ENCODE measurements at regions of chr17 and their contacts with region 1.

Region 1: GRCh38 chr17:49567871-49568694 is 7.6 kb upstream of the NXPH3 start:
- DNase-seq: peak; percentile 82
- H3K4me3 ChIP-seq: peak overlapping the region; percentile 51
- H3K27ac ChIP-seq: no peak overlapping the region
- H3K4me1 ChIP-seq: peaks cover 3% of the 10 kb centered on the region
- H3K27me3 ChIP-seq: no peaks in the 10 kb centered on the region
- CTCF ChIP-seq: peak; percentile 91

Region 2: DNA sequence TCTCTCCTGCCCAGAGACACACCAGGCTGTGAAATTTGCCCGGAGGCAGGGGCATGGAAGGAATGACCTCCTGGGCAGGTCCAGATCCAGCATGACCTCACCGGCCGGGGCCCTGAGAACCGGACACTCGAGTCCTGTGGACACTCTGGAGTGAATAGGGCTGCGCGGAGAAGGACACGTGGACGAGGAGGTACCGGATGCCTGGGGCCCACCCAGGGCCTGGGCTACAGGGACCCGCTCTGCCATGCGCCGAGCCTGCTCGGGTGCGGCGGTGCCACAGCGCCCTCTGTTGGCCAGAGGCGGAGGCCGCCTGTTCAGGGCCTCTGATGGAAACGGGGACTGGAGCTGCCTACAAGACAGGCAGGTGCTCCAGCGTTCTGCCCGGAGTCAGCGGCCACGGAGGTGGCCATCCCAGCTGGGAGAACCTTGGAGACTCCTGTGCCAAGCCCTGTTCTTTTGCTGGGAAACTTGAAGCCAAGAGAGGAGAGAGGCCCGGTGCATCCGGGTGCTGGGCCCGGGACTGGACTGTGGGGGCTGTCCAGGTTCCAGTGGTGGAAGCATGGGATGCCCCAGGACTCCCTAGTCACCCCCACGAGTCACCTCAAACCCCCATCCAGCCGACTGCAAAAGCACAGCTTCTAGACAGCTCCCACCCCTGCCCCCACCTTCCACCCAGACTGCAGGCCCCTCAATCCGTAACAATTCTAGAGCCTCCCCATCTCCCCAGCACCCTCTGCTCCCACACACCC is 11.7 kb before region 1 on chr17:
- CTCF ChIA-PET with region 1: interaction called, 11 read pairs
- POLR2A ChIA-PET with region 1: no interaction called
- intact Hi-C with region 1: no loop called
- DNase-seq: peak; percentile 88
- H3K4me3 ChIP-seq: no peak overlapping the region
- H3K27ac ChIP-seq: no peak overlapping the region
- H3K4me1 ChIP-seq: peaks cover 4% of the 10 kb centered on the region
- H3K27me3 ChIP-seq: no peaks in the 10 kb centered on the region
- CTCF ChIP-seq: peak; percentile 99

Region 3: DNA sequence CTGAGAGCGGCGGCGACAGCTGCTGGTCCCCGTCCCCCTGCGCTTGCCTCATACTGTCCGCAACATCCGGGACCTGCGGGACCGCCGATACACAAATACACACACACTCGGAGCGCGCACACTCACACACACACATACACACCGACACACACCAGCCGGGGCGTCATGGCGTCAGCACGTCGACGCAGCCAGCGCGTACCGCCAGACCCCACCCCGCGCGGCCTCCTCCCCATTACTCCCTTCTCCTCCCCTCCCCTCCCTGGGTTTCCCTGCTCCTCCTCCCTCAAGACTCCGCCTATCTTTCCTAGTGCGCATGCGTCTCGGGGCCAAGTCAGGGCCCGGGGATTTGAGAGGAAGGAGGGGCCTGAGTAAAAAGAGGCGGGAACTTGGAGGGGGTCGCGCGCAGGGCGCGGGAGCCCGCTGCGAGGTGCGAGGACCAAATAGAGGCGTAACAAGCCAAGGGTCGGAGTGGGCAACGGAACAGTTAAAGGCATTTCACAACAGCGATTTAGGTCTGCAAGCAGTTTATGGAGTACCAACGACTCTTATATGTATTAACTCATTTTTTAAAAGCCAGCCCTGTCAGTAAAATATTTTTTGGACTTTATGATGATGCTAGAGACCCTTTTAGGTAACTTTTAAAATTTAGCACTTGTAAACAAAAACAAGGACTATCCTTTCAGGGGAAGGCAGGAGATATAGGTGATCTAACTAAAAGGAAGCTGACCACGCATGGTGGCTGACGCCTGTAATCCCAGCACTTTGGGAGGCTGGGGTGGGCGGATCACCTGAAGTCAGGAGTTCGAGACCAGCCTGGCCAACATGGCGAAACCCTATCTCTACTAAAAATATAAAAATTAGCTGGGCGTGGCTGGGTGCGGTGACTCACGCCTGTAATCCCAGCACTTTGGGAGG is 110.1 kb after region 1 on chr17 and contains the start of gene SPOP:
- CTCF ChIA-PET with region 1: interaction called, 10 read pairs
- POLR2A ChIA-PET with region 1: no interaction called
- intact Hi-C with region 1: no loop called
- DNase-seq: peak; percentile 99
- H3K4me3 ChIP-seq: peak within 1 kb of the TSS; percentile 73
- H3K27ac ChIP-seq: peak within 1 kb of the TSS; percentile 92
- H3K4me1 ChIP-seq: peaks cover 14% of the 10 kb centered on the region
- H3K27me3 ChIP-seq: no peaks in the 10 kb centered on the region
- CTCF ChIP-seq: no peak
- total RNA-seq, gene SPOP: 53.4 and 66.6 TPM in 2 replicates

Region 4: DNA sequence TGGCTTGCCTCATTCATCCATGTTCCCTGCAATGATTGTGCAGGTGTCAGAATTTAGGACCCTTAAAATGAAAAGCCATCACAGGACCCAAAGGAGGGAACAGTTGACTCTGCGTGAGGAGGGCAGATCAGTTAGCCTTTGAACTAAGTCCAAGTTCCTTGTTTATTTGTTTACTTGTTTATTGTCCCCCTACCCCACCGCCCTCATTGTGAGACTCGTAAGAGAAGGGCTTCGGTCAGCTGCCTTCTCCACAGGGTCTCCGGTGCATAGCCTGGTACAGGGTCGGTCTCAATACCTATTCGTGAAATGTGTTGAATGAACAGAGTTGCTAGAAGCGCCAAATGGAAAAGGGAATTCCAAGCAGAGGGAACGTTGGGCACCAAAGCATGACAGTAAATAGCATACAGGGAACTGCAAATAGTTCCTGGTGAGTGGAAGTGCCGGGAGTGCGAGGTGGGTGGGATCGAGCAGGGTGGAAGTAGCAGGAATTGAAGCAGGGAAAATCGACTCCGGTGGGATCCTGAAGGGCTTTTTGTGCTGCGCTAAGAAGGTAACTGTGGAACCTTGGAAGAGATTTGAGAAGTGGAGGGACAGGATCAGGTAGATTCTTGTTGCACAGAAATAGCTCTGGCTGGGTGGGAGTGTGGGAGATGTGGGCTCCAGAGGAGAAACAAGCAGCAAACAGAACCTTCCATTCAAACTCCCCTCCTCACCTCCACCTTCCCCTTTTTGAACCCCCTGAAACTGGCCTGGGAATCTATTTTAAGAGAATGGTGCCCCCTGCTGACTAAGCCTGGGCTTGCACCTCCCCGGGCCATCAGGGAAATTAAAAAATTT is 127.0 kb after region 1 on chr17:
- CTCF ChIA-PET with region 1: interaction called, 6 read pairs
- POLR2A ChIA-PET with region 1: no interaction called
- intact Hi-C with region 1: loop called (anchors 1 kb)
- DNase-seq: peak; percentile 49
- H3K4me3 ChIP-seq: no peak overlapping the region
- H3K27ac ChIP-seq: no peak overlapping the region
- H3K4me1 ChIP-seq: no peaks in the 10 kb centered on the region
- H3K27me3 ChIP-seq: no peaks in the 10 kb centered on the region
- CTCF ChIP-seq: peak; percentile 96

Region 5: GRCh38 chr17:49707608-49708514 is 139.8 kb after region 1 on chr17 and contains the start of gene SLC35B1:
- CTCF ChIA-PET with region 1: interaction called, 15 read pairs
- POLR2A ChIA-PET with region 1: no interaction called
- intact Hi-C with region 1: no loop called
- DNase-seq: peak; percentile 99
- H3K4me3 ChIP-seq: peak within 1 kb of the TSS; percentile 91
- H3K27ac ChIP-seq: peak within 1 kb of the TSS; percentile 98
- H3K4me1 ChIP-seq: peaks cover 8% of the 10 kb centered on the region
- H3K27me3 ChIP-seq: no peaks in the 10 kb centered on the region
- CTCF ChIP-seq: peak; percentile 93
- total RNA-seq, gene SLC35B1: 104 and 106 TPM in 2 replicates

Region 6: GRCh38 chr17:49851387-49852291 is 283.6 kb after region 1 on chr17:
- CTCF ChIA-PET with region 1: interaction called, 4 read pairs
- POLR2A ChIA-PET with region 1: no interaction called
- intact Hi-C with region 1: loop called (anchors 1 kb)
- DNase-seq: peak; percentile 86
- H3K4me3 ChIP-seq: peak overlapping the region; percentile 53
- H3K27ac ChIP-seq: no peak overlapping the region
- H3K4me1 ChIP-seq: no peaks in the 10 kb centered on the region
- H3K27me3 ChIP-seq: no peaks in the 10 kb centered on the region
- CTCF ChIP-seq: peak; percentile 91

Region 7: DNA sequence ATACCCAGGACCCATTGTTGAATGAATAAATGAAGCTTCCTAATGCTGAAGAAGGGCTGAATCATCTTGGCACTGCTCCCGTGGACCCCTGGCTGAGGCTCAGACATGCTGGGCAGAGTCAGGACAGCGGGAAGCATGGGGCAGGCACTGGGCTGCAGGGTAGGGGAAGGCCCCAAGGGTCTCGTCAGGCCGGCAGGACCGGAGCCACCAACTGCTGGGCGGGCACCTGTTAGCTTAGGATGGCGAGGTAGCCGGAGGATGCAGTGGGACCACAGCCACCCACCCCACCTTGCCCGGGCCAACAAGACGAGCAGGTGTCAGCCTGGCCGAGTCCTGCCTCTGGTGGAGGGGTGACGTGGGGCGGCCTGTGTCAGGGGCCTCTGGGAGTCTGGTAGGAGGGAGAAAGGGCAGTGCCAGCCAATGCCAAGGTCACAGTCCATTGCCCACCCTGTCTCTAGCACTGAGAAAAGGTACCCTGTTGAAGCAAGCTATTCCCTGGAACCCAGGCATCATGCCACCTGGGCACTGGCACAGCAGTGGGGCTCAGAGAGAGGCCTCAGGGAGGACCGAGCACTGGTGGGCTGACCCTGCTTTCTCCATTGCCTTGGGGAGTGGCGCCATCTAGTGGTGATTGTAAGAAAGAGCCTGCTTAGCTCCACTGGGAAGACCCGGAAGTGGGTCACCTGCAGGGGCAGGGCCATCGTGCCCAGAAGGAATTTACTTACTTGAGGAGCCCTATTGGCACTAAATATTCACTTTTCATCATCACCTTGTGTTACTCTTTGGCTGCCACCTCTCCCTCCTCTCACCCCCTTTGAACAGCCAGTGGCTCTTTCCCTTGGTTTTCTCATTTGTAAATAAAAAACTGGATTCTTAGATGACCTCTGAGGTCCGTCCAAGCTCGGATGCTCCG is 430.0 kb after region 1 on chr17:
- CTCF ChIA-PET with region 1: interaction called, 7 read pairs
- POLR2A ChIA-PET with region 1: no interaction called
- intact Hi-C with region 1: loop called (anchors 1 kb)
- DNase-seq: peak; percentile 94
- H3K4me3 ChIP-seq: no peak overlapping the region
- H3K27ac ChIP-seq: no peak overlapping the region
- H3K4me1 ChIP-seq: peaks cover 11% of the 10 kb centered on the region
- H3K27me3 ChIP-seq: peaks cover 55% of the 10 kb centered on the region
- CTCF ChIP-seq: peak; percentile 95